PC-9 (cell line): ENCODE measurements at regions of chr11 and their contacts with region 1.

Region 1: GRCh38 chr11:94017446-94017845 is 3.7 kb upstream of the HEPHL1 start:
- DNase-seq: peak in 1 of 2 experiments; percentile 76
- H3K4me3 ChIP-seq: no peak overlapping the region
- H3K27ac ChIP-seq: peak overlapping the region; percentile 28; the same call in 1 of the 2 replicates
- H3K4me1 ChIP-seq: peaks cover 29% of the 10 kb centered on the region
- H3K27me3 ChIP-seq: no peaks in the 10 kb centered on the region
- CTCF ChIP-seq: no peak

Region 2: DNA sequence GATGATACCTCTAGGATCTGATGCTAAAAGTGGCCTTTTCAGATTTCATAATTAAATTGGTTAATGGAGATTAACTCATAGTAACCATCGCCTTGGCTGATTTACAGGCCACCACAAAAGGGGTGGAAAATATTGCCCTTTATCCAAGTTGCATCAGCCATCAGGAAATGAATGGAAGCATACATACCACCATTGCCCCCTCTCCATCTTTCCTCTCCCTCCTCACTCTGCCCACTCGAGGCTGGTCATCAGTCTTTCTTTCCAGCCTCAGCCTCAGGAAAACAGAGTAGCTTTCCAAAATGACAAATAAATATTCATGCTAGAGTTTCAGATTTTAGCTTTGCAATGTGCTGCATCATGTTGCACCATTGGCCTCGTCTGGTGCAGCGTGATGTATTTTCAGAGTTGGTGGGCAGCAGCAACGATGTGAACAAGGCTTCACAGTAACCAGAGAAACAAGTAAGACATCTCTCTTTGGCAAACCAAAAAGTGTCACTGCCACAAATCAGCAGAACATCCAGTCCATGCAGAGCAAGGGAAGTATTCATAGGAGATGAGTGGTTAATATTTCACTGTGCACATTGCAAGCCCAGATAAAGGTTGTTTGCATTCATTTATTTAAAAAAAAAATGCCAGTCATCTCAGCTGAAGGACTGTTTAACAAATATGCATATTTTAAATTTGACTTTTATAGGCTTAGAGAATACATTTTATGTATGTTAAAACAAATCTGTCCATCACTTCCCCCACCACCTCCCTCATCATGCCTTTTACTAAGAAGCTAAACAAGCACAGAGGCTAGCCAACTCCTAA is 1929.5 kb before region 1 on chr11:
- CTCF ChIA-PET with region 1: interaction called, 10 read pairs
- POLR2A ChIA-PET with region 1: no interaction called
- intact Hi-C with region 1: no loop called
- DNase-seq: no peak
- H3K4me3 ChIP-seq: no peak overlapping the region
- H3K27ac ChIP-seq: no peak overlapping the region
- H3K4me1 ChIP-seq: no peaks in the 10 kb centered on the region
- H3K27me3 ChIP-seq: no peaks in the 10 kb centered on the region
- CTCF ChIP-seq: no peak

Region 3: DNA sequence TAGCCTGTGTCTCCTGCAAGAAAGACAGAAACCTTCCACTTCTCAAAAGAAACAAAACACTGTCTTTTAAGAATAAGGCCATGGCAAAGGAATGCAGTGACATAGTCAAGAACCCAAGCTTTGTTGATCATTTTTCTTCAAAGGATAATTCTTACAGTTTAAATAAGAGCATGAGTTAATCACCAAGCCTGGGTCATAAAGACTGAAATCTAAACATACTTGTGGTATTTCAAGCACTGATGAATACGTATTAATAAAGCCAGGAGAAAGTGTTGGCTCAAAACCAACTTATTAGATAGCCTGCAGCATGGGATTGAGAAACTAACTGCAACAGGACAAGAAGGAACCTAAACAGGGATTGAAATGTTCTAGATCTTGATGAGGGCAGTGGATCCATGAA is 1191.3 kb before region 1 on chr11:
- CTCF ChIA-PET with region 1: no interaction called
- POLR2A ChIA-PET with region 1: no interaction called
- intact Hi-C with region 1: no loop called
- DNase-seq: peak in 1 of 2 experiments; percentile 52
- H3K4me3 ChIP-seq: no peak overlapping the region
- H3K27ac ChIP-seq: no peak overlapping the region
- H3K4me1 ChIP-seq: no peaks in the 10 kb centered on the region
- H3K27me3 ChIP-seq: no peaks in the 10 kb centered on the region
- CTCF ChIP-seq: no peak